CD4-positive, alpha-beta T cell (primary cell): ENCODE measurements at regions of chr14 and their contacts with region 1.

Region 1: GRCh38 chr14:58427281-58428117 is at the starts of genes KIAA0586 and TIMM9:
- DNase-seq: peak; percentile 91 to 99 (median 96)
- ATAC-seq: peak; percentile 90
- H3K4me3 ChIP-seq: peak within 1 kb of the TSS; percentile 81
- H3K4me3 Mint-ChIP-seq: peak within 1 kb of the TSS; percentile 92
- H3K27ac ChIP-seq: peak within 1 kb of the TSS; percentile 86 to 95
- H3K27ac Mint-ChIP-seq: peak within 1 kb of the TSS; percentile 93
- H3K4me1 ChIP-seq: peaks cover 18% of the 10 kb centered on the region
- H3K4me1 Mint-ChIP-seq: peaks cover 70% of the 10 kb centered on the region
- H3K27me3 ChIP-seq: no peaks in the 10 kb centered on the region
- H3K27me3 Mint-ChIP-seq: no peaks in the 10 kb centered on the region
- CTCF ChIP-seq: no peak
- total RNA-seq, gene KIAA0586: 16.5 to 18.2 TPM
- total RNA-seq, gene TIMM9: 33.1 to 34.9 TPM

Region 2: DNA sequence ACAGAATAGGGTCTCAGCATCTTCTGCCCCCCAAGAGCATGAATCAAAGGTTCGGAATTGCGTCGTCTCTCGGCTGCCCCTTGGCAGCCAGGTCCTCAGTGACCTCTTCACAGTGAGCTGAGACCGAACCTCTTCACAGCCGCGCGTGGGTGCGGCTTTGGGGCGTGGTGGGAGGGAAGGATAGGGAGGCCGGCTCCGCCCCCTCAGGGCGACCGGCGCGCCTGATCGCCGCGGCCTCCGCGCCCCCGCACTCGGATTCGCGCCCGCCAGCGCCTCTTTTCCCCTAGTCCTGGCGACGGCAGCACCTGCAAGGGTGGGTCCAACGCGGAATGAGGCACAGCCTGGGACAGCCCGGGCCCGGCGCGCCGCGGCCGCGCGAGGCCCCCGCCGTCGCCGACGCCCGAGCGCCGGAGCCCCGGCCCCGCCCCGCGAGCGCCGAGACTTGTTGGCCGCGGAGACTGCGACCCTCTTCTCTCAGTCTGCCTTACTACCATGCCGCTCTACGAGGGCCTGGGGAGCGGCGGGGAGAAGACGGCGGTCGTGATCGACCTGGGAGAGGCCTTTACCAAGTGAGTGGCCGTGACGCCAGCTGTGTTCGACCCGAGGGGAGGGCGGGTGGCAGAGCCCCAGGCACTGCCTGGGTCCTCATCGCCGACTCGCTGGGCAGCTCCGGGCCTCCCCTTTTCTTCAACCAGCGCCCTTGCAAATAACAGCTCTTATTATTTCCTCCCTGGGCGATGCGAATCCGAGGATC is 227.6 kb before region 1 on chr14 and contains the start of gene ACTR10:
- CTCF ChIA-PET with region 1: no interaction called
- POLR2A ChIA-PET with region 1: interaction called, 15 read pairs
- intact Hi-C with region 1: loop called in 1 of 2 experiments (anchors 2 kb)
- DNase-seq: peak; percentile 76 to 92 (median 84)
- ATAC-seq: peak; percentile 86
- H3K4me3 ChIP-seq: peak within 1 kb of the TSS; percentile 98
- H3K4me3 Mint-ChIP-seq: peak within 1 kb of the TSS; percentile 94
- H3K27ac ChIP-seq: peak within 1 kb of the TSS; percentile 85 to 89
- H3K27ac Mint-ChIP-seq: peak within 1 kb of the TSS; percentile 95
- H3K4me1 ChIP-seq: peaks cover 15% of the 10 kb centered on the region
- H3K4me1 Mint-ChIP-seq: peaks cover 40% of the 10 kb centered on the region
- H3K27me3 ChIP-seq: no peaks in the 10 kb centered on the region
- H3K27me3 Mint-ChIP-seq: no peaks in the 10 kb centered on the region
- CTCF ChIP-seq: no peak
- total RNA-seq, gene ACTR10: 38.8 to 43.6 TPM

Region 3: GRCh38 chr14:58331111-58331510 is 96.4 kb before region 1 on chr14:
- CTCF ChIA-PET with region 1: no interaction called
- POLR2A ChIA-PET with region 1: interaction called, 5 read pairs
- intact Hi-C with region 1: loop called in 1 of 2 experiments (anchors 5 kb)
- DNase-seq: peak; percentile 80 to 98 (median 91)
- ATAC-seq: peak; percentile 96
- H3K4me3 ChIP-seq: peak overlapping the region; percentile 1
- H3K4me3 Mint-ChIP-seq: peak overlapping the region; percentile 65
- H3K27ac ChIP-seq: peak overlapping the region; percentile 67 to 72
- H3K27ac Mint-ChIP-seq: peak overlapping the region; percentile 86
- H3K4me1 ChIP-seq: peaks cover 3% of the 10 kb centered on the region
- H3K4me1 Mint-ChIP-seq: peaks cover 33% of the 10 kb centered on the region
- H3K27me3 ChIP-seq: no peaks in the 10 kb centered on the region
- H3K27me3 Mint-ChIP-seq: no peaks in the 10 kb centered on the region
- CTCF ChIP-seq: no peak

Region 4: GRCh38 chr14:58501214-58501816 is 73.8 kb after region 1 on chr14:
- CTCF ChIA-PET with region 1: no interaction called
- POLR2A ChIA-PET with region 1: no interaction called
- intact Hi-C with region 1: no loop called
- DNase-seq: peak in 5 of 14 experiments; percentile 21 to 70 (median 46)
- ATAC-seq: peak; percentile 71
- H3K4me3 ChIP-seq: no peak overlapping the region
- H3K4me3 Mint-ChIP-seq: no peak overlapping the region
- H3K27ac ChIP-seq: no peak overlapping the region
- H3K27ac Mint-ChIP-seq: no peak overlapping the region
- H3K4me1 ChIP-seq: no peaks in the 10 kb centered on the region
- H3K4me1 Mint-ChIP-seq: no peaks in the 10 kb centered on the region
- H3K27me3 ChIP-seq: no peaks in the 10 kb centered on the region
- H3K27me3 Mint-ChIP-seq: no peaks in the 10 kb centered on the region
- CTCF ChIP-seq: peak; percentile 82

Region 5: GRCh38 chr14:58765418-58765831 is 337.9 kb after region 1 on chr14:
- CTCF ChIA-PET with region 1: no interaction called
- POLR2A ChIA-PET with region 1: no interaction called
- intact Hi-C with region 1: no loop called
- DNase-seq: no peak
- ATAC-seq: no peak
- H3K4me3 ChIP-seq: no peak overlapping the region
- H3K4me3 Mint-ChIP-seq: no peak overlapping the region
- H3K27ac ChIP-seq: no peak overlapping the region
- H3K27ac Mint-ChIP-seq: no peak overlapping the region
- H3K4me1 ChIP-seq: no peaks in the 10 kb centered on the region
- H3K4me1 Mint-ChIP-seq: no peaks in the 10 kb centered on the region
- H3K27me3 ChIP-seq: no peaks in the 10 kb centered on the region
- H3K27me3 Mint-ChIP-seq: no peaks in the 10 kb centered on the region
- CTCF ChIP-seq: no peak

Region 6: GRCh38 chr14:59189786-59190771 is 762.6 kb after region 1 on chr14:
- CTCF ChIA-PET with region 1: no interaction called
- POLR2A ChIA-PET with region 1: interaction called, 5 read pairs
- intact Hi-C with region 1: loop called (anchors 5 kb)
- DNase-seq: peak; percentile 28 to 91 (median 56)
- ATAC-seq: no peak
- H3K4me3 ChIP-seq: peak overlapping the region; percentile 83
- H3K4me3 Mint-ChIP-seq: peak overlapping the region; percentile 99
- H3K27ac ChIP-seq: peak overlapping the region; percentile 84 to 87
- H3K27ac Mint-ChIP-seq: peak overlapping the region; percentile 94
- H3K4me1 ChIP-seq: peaks cover 20% of the 10 kb centered on the region
- H3K4me1 Mint-ChIP-seq: peaks cover 29% of the 10 kb centered on the region
- H3K27me3 ChIP-seq: no peaks in the 10 kb centered on the region
- H3K27me3 Mint-ChIP-seq: no peaks in the 10 kb centered on the region
- CTCF ChIP-seq: no peak